CD4-positive, alpha-beta memory T cell (primary cell): ENCODE measurements at regions of chr12 and their contacts with region 1.

Region 1: DNA sequence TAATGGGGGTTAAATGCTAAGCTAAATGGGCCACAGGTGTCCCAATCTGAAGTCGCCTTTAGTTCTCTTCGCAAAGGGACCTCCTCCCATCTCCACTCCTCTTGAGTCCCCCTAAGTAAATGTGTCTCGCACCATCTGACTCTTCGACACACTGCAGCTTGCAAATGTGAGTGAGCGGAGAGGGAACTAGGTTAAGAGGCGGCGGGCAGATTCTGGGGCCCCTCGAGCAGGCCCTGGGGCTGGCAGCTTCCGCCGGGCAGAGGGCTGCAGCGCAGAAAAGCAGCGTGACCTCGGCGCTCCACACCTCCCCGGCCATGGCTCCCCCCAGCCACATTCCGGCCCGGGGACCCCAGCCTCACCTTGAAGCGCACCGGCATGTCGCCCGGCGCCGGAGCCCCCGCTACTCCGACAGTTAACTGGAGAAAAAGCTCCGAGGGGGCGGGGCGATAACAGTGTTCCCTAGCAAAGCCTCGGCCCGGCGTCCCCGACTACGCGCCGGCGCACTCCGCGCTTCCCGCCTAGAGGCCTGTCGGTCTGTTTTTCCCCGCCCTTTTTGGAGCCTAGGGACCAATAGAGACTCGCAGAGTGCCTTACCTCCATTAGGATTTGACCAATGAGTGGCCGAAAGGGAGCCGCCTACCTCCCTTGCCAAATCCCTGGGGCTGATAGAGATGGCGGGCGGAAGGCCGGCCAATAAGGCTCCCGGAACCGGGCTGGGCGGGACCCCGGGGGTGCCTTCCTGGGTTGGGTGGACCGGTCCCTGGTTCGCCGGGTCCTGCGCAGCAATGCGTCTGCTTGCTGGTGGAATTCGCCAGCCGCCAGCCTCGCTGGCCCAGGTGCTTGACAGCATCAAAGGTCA is at the start of gene MDM1:
- DNase-seq: peak; percentile 95 to 98 (median 96)
- H3K4me3 ChIP-seq: peak within 1 kb of the TSS; percentile 60 to 77
- H3K4me3 Mint-ChIP-seq: peak within 1 kb of the TSS; percentile 88 to 93 (median 90)
- H3K27ac ChIP-seq: peak within 1 kb of the TSS; percentile 58
- H3K27ac Mint-ChIP-seq: peak within 1 kb of the TSS; percentile 64 to 95 (median 91)
- H3K4me1 ChIP-seq: peaks cover 30% of the 10 kb centered on the region
- H3K4me1 Mint-ChIP-seq: peaks cover 32 to 49% (median 42%) of the 10 kb centered on the region in 4 donors
- H3K27me3 ChIP-seq: no peaks in the 10 kb centered on the region
- H3K27me3 Mint-ChIP-seq: peaks cover 0 to 2% of the 10 kb centered on the region in 2 donors
- total RNA-seq, gene MDM1: 27.0 to 29.4 TPM

Region 2: GRCh38 chr12:68374307-68374982 is 42.3 kb after region 1 on chr12:
- CTCF ChIA-PET with region 1: no interaction called
- POLR2A ChIA-PET with region 1: no interaction called
- intact Hi-C with region 1: loop called (anchors 2 kb)
- DNase-seq: peak; percentile 43 to 81 (median 64)
- H3K4me3 ChIP-seq: peak overlapping the region in 1 of 2 donors; percentile 4
- H3K4me3 Mint-ChIP-seq: peak overlapping the region in 6 of 8 donors; percentile 47 to 77 (median 68)
- H3K27ac ChIP-seq: peak overlapping the region; percentile 24
- H3K27ac Mint-ChIP-seq: peak overlapping the region; percentile 72 to 90 (median 85)
- H3K4me1 ChIP-seq: peaks cover 39% of the 10 kb centered on the region
- H3K4me1 Mint-ChIP-seq: peaks cover 20 to 60% (median 31%) of the 10 kb centered on the region in 4 donors
- H3K27me3 ChIP-seq: no peaks in the 10 kb centered on the region
- H3K27me3 Mint-ChIP-seq: no peaks in the 10 kb centered on the region

Region 3: DNA sequence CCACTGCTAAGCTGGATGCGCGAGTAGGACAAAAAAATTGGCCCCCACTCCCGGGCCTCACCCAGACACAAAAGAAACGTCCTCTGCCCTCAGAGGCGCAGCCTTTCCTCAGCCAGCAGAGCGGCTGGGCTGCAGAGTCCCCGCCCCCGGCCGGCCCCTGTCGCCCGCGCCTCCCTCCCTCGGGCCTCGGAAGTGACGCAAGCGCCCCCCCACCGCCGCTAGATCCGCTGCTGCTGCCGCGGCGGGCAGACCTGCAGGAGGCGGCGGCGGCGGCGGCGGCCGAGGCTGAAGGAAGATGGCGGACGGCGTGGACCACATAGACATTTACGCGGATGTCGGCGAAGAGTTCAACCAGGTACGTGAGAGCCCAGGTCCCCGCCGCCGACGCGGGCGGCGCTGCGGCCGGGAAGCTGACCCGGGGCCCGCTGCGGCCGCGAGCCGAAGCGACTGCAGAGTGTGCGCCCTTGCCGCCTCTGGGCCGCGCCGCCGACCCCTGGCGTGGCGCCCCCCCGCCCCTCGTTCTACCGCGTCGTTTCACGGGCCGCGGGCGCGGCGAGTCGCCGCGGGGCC is 907.3 kb after region 1 on chr12 and contains the start of gene CPSF6:
- CTCF ChIA-PET with region 1: no interaction called
- POLR2A ChIA-PET with region 1: no interaction called
- intact Hi-C with region 1: loop called (anchors 5 kb)
- DNase-seq: peak; percentile 95 to 96 (median 95)
- H3K4me3 ChIP-seq: peak within 1 kb of the TSS; percentile 60 to 94
- H3K4me3 Mint-ChIP-seq: peak within 1 kb of the TSS; percentile 96 to 100 (median 98)
- H3K27ac ChIP-seq: peak within 1 kb of the TSS; percentile 89
- H3K27ac Mint-ChIP-seq: peak within 1 kb of the TSS; percentile 98 to 100 (median 99)
- H3K4me1 ChIP-seq: peaks cover 52% of the 10 kb centered on the region
- H3K4me1 Mint-ChIP-seq: peaks cover 36 to 57% (median 47%) of the 10 kb centered on the region in 4 donors
- H3K27me3 ChIP-seq: no peaks in the 10 kb centered on the region
- H3K27me3 Mint-ChIP-seq: no peaks in the 10 kb centered on the region
- total RNA-seq, gene CPSF6: 109 to 120 TPM